ENCODE measurements at regions of chr1 and their contacts with region 1.

Region 1: DNA sequence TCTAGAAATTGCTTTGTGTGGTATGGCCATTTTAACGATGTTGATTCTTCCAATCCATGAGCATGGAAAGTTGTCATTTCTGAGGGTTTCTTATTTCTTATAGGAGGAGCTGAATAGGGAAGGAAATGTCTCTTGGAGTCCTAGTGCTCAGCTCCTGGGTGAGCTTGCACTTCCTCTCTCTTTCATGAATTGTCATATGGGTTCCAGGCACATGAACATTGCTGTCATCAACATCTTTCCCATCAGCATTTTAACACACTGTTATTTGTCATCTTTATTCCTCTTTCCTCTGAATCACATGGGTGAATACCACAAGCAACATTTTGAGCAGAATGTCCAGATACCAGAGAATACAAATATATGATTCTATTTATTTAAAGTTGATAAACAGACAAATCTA is 23.4 kb downstream of the SLAMF6 start:
- H3K4me3 Mint-ChIP-seq: no peak overlapping the region
- H3K27ac Mint-ChIP-seq: peak overlapping the region; percentile 95
- H3K4me1 Mint-ChIP-seq: peaks cover 34% of the 10 kb centered on the region
- H3K27me3 Mint-ChIP-seq: no peaks in the 10 kb centered on the region

Region 2: GRCh38 chr1:160539990-160540858 is 40.6 kb after region 1 on chr1:
- intact Hi-C with region 1: loop called (anchors 2 kb)
- H3K4me3 Mint-ChIP-seq: no peak overlapping the region
- H3K27ac Mint-ChIP-seq: peak overlapping the region; percentile 83
- H3K4me1 Mint-ChIP-seq: peaks cover 46% of the 10 kb centered on the region
- H3K27me3 Mint-ChIP-seq: no peaks in the 10 kb centered on the region

Region 3: DNA sequence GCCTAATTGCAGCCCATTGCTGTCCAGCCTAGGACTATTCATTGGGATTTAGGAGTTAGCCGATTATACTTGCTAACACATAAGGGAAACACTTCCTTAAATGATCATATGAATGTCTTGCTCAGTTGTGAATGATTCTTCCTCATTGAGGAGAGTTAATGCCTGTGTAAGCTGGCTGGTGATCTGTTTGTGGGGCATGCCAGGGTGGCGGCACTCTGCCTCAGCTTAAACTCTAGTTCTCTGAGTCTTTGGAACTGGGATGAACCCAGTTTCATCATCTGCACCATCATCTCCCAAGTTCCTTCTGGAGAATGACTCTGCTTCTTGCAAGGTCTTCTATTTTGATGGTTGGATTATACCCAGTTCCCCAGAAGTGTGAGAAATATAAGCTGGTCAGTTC is 47.3 kb after region 1 on chr1:
- intact Hi-C with region 1: loop called (anchors 1 kb)
- H3K4me3 Mint-ChIP-seq: peak overlapping the region; percentile 47
- H3K27ac Mint-ChIP-seq: peak overlapping the region; percentile 77
- H3K4me1 Mint-ChIP-seq: peaks cover 79% of the 10 kb centered on the region
- H3K27me3 Mint-ChIP-seq: no peaks in the 10 kb centered on the region